CD8-positive, alpha-beta T cell (primary cell): ENCODE measurements at regions of chr1 and their contacts with region 1.

Region 1: DNA sequence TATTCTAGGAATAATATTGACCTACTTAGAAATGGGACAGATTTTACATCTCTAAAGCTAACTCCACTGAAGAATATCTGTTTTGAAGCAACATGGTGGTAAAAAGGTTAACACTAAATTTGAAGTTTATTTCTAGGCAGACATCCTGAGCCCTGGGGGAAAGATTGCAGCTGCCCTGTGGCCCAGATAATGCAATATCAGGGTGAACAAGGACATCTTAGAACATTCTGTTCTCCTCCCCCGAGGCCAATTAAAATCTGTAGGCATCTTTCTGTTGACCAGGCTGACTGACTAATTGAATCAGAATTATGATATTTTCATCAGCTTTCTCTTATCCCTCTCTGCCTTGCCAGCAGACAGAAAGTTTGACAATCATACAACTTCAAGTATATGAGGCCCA is 149.8 kb upstream of the DUSP10 start:
- DNase-seq: no peak
- ATAC-seq: no peak
- H3K4me3 ChIP-seq: no peak overlapping the region
- H3K4me3 Mint-ChIP-seq: no peak overlapping the region
- H3K27ac ChIP-seq: no peak overlapping the region
- H3K27ac Mint-ChIP-seq: no peak overlapping the region
- H3K4me1 ChIP-seq: no peaks in the 10 kb centered on the region
- H3K4me1 Mint-ChIP-seq: no peaks in the 10 kb centered on the region
- H3K27me3 ChIP-seq: no peaks in the 10 kb centered on the region
- H3K27me3 Mint-ChIP-seq: peaks cover 2% of the 10 kb centered on the region
- CTCF ChIP-seq: no peak

Region 2: GRCh38 chr1:221344693-221345092 is 547.0 kb before region 1 on chr1:
- CTCF ChIA-PET with region 1: no interaction called
- POLR2A ChIA-PET with region 1: no interaction called
- intact Hi-C with region 1: no loop called
- DNase-seq: no peak
- ATAC-seq: no peak
- H3K4me3 ChIP-seq: no peak overlapping the region
- H3K4me3 Mint-ChIP-seq: no peak overlapping the region
- H3K27ac ChIP-seq: no peak overlapping the region
- H3K27ac Mint-ChIP-seq: no peak overlapping the region
- H3K4me1 ChIP-seq: no peaks in the 10 kb centered on the region
- H3K4me1 Mint-ChIP-seq: no peaks in the 10 kb centered on the region
- H3K27me3 ChIP-seq: no peaks in the 10 kb centered on the region
- H3K27me3 Mint-ChIP-seq: no peaks in the 10 kb centered on the region
- CTCF ChIP-seq: no peak

Region 3: DNA sequence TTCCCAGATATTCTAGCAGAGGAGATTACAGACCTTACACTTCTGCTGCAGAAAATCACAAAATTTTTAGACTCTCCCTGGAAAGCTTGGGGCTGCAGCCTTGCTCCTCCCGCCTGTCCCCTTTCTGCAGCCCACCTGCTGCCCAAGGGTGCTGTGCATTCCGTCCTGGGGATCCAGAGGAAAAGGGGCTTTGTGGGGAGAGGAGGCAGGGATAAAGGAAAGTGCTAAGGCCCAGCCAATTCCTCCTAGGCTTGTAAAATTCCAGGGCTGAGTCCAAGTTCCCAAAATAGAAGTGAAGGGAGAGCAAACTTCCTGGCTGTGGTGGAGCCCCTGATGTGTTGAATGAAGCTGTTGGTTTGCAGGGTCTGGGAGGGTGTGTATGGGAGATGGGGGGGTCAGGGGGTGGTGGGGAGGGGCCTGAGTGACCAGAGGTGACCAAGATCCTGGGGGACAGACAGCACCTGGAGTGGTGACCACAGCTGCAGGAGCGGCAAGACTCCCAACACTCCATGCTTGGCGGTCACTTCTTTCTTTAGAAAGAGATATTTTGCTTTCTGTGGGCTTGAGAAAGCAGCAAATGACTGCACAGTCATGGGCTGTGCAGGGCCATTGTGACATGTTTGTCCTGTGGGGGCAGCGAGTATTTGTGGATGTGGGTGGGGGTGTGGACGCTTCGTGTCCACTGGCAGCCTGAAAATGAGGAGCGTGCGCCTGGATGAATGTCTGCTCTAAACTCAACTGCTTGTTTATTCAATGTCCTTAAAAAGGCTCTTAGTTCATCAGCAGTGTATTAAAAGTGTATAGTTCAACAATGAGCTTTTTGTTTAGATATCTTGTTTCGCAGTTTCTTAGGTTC is 1183.0 kb after region 1 on chr1:
- CTCF ChIA-PET with region 1: no interaction called
- POLR2A ChIA-PET with region 1: no interaction called
- intact Hi-C with region 1: loop called in 1 of 2 experiments (anchors 5 kb)
- DNase-seq: no peak
- ATAC-seq: no peak
- H3K4me3 ChIP-seq: no peak overlapping the region
- H3K4me3 Mint-ChIP-seq: no peak overlapping the region
- H3K27ac ChIP-seq: no peak overlapping the region
- H3K27ac Mint-ChIP-seq: no peak overlapping the region
- H3K4me1 ChIP-seq: no peaks in the 10 kb centered on the region
- H3K4me1 Mint-ChIP-seq: no peaks in the 10 kb centered on the region
- H3K27me3 ChIP-seq: no peaks in the 10 kb centered on the region
- H3K27me3 Mint-ChIP-seq: peaks cover 7% of the 10 kb centered on the region
- CTCF ChIP-seq: no peak